Right ventricle myocardium superior (tissue), 1 donor: ENCODE measurements at regions of chr17 and their contacts with region 1.

Region 1: GRCh38 chr17:74368092-74369081 is 1.1 kb downstream of the GPR142 start:
- DNase-seq: peak; percentile 84
- ATAC-seq: peak; percentile 85

Region 2: GRCh38 chr17:73936908-73937627 is 431.3 kb before region 1 on chr17:
- intact Hi-C with region 1: no loop called
- DNase-seq: no peak
- ATAC-seq: no peak

Region 3: GRCh38 chr17:74089869-74090464 is 278.4 kb before region 1 on chr17:
- intact Hi-C with region 1: no loop called
- DNase-seq: peak; percentile 46
- ATAC-seq: no peak

Region 4: GRCh38 chr17:74249590-74250270 is 118.7 kb before region 1 on chr17:
- intact Hi-C with region 1: no loop called
- DNase-seq: no peak
- ATAC-seq: no peak

Region 5: GRCh38 chr17:74493381-74493833 is 125.0 kb after region 1 on chr17:
- intact Hi-C with region 1: loop called (anchors 5 kb)
- DNase-seq: peak; percentile 80
- ATAC-seq: peak; percentile 79